ENCODE measurements at regions of chr11 and their contacts with region 1.

Region 1: DNA sequence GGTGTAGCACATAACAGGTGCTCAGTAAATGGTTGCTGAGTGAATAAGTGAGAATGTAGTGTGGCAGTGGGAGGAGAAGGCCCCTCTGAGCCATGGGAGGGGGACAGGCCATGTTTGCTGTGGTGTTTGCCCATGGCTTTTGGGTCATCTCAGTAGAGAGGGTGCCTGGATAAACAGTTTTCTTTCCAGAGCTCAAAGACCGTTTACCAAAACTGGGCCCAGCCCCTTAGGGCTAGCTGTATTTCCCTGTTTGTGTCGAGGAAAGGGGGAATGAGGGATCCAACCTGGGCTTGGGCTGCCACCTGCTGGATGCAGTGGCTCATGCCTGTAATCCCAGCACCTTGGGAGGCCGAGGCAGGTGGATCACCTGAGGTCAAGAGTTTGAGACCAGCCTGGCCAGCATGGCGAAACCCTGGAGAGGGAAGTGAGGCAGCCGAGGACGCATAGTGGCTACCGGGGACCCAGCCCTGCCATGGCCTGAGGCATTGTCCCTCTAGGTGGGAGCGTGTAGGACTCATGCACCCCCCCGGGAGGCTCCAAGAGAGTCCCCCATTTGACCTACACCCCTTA is 8.7 kb upstream of the LTO1 start:
- DNase-seq: no peak
- H3K4me3 ChIP-seq: no peak overlapping the region
- H3K27ac ChIP-seq: no peak overlapping the region
- H3K27me3 ChIP-seq: peaks cover 0 to 9% (median 0%) of the 10 kb centered on the region in 45 donors
- CTCF ChIP-seq: peak in 11 of 56 donors; percentile 6 to 27 (median 18)

Region 2: DNA sequence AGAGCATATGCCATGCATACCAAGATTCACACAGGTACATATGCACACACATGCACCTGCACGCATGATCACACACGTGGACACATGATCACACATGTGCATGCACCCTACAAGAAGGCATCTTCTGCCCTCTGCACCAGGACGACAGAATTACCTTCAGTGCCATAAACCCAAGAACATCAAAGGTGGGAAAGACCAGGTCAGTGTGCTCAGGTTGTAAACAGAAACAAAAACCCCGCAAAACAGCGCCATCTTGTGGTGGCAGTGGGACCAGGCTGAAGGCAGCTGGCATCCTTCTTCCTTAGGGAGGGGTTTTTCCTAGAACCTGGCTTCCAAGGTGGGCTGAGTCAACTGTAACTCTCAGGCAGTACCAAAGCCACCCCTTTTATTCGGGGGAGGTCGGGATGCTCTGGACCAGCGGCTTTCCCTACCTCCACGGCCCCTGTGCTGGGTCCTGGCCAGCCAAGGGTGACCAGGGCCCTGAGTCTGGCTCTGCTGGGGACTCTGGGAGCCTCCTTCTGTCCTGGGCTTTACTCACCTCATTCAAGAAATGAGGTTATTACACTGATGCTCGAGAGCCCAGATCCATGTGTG is 204.7 kb after region 1 on chr11:
- intact Hi-C with region 1: loop called (anchors 2 to 5 kb)
- DNase-seq: peak in 6 of 10 donors; percentile 34 to 75 (median 58)
- H3K4me3 ChIP-seq: no peak overlapping the region
- H3K27ac ChIP-seq: no peak overlapping the region
- H3K27me3 ChIP-seq: peaks cover 0 to 21% (median 2%) of the 10 kb centered on the region in 45 donors
- CTCF ChIP-seq: peak; percentile 64 to 92 (median 87)

Region 3: GRCh38 chr11:70191495-70192140 is 507.8 kb after region 1 on chr11:
- intact Hi-C with region 1: loop called (anchors 5 kb)
- DNase-seq: peak in 8 of 10 donors; percentile 11 to 66 (median 42)
- H3K4me3 ChIP-seq: no peak overlapping the region
- H3K27ac ChIP-seq: no peak overlapping the region
- H3K27me3 ChIP-seq: peaks cover 0 to 6% (median 0%) of the 10 kb centered on the region in 45 donors
- CTCF ChIP-seq: peak; percentile 30 to 86 (median 70)